GM12878 (cell line): ENCODE measurements at regions of chr1 and their contacts with region 1.

Region 1: DNA sequence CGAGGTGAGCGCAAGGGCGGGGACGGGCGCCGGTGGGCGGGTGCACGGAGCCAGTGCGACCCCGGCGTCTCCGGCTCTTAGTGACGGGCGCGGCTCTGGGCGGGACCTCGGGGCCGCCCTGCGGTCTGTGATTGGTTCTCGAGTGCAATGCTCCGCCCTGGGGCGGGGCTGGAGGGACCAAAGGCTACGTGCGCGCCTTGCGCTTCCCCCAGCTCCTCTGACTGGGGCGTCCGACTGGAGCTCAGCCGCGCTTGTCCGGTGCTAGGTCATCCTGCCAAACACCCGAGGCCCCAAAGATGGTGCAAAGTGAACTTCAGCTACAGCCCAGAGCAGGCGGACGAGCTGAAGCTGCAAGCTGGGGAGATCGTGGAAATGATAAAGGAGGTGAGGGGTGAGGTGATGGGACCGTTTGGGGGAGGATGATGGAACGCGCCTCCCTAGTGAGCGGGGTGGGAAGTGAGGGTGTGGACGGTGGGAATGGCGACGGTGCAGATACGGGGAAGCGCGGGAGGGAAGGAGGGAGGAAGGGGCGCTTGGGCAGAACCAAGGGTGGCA is 811 bp downstream of the SH3D21 start:
- DNase-seq: peak; percentile 80
- ATAC-seq: peak; percentile 99
- H3K4me3 ChIP-seq: peak overlapping the region; percentile 95
- H3K27ac ChIP-seq: peak overlapping the region; percentile 46
- H3K4me1 ChIP-seq: peaks cover 27% of the 10 kb centered on the region
- H3K27me3 ChIP-seq: no peaks in the 10 kb centered on the region
- CTCF ChIP-seq: no peak
- EP300 ChIP-seq: no peak
- POLR2A ChIP-seq: peak; percentile 98
- RAD21 ChIP-seq: no peak

Region 2: DNA sequence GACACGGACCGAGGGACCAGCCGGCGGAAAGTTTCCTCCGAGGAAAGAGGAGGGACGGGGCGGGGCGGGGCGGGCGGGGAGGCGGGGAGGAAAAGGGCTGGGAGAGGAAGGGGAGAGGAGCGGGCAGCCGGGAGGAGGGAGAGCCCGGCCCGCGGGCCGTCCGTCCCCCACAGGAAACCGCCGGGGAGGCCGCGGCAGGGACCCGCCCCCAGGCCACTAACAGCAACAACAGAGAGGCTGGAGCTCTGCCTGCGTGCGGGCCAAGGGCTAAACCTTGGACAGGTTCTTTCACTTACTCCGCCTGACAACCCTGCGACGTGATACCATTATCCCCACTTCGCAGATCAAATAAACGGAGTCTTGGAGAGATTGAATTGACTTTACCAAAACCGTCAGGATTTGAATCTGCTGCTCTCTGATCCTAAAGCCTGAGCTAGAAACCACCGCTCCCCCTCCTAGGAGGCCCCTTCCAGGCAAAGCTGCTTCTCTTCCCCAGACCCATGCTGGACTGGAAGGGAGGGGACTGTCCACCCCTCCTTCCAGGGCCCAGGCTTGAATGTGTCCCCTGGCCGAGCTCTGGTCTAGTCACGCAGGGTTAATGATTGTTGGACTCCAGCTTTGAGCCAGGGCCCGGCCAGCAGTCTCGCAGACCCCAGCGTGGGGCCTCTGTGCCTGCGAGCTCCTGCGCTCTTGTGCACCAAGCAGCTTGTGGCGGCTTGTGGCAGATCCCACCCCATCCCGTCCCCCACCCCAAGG is 16.8 kb after region 1 on chr1 and contains the start of gene EVA1B:
- CTCF ChIA-PET with region 1: interaction called, 10 read pairs
- POLR2A ChIA-PET with region 1: interaction called, 5 read pairs
- RAD21 ChIA-PET with region 1: interaction called, 5 read pairs
- SMC1A ChIA-PET with region 1: interaction called, 5 read pairs
- in situ Hi-C with region 1: no loop called
- intact Hi-C with region 1: no loop called
- DNase-seq: no peak
- ATAC-seq: peak; percentile 69
- H3K4me3 ChIP-seq: peak within 1 kb of the TSS; percentile 70
- H3K27ac ChIP-seq: no peak within 1 kb of the TSS
- H3K4me1 ChIP-seq: peaks cover 24% of the 10 kb centered on the region
- H3K27me3 ChIP-seq: no peaks in the 10 kb centered on the region
- CTCF ChIP-seq: no peak
- EP300 ChIP-seq: no peak
- POLR2A ChIP-seq: no peak; the same call in 1 of the 2 replicates
- RAD21 ChIP-seq: no peak
- polyA plus RNA-seq, gene EVA1B: 0.15 TPM in 1 of 2 experiments, not detected in the other

Region 3: DNA sequence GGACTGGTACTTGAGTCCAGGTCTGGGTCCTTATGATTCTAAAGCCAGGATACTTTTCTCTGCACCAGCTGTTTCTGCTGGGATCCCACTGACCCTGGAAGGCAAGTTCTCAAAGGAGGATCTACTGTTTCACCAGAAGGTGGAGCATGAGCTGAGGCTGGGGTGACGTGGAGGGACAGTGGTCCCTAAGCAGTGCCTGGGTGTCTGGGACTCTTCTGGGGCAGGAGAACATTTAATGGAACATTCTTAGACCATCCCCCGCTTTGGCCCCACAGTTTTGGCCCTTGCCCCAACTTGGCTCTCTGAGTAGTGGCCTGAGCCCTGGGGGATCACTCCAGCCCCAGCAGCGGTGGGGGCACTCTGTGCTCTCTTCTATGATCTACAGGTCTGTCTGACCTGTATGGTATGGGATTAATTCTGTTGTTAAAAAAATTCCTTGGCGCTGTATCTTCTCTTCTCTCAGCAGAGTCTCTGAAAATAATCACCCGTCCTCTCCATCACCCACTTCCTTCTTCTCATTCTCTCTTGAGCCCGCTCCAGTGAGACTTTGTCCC is 236.1 kb after region 1 on chr1:
- CTCF ChIA-PET with region 1: no interaction called
- POLR2A ChIA-PET with region 1: no interaction called
- RAD21 ChIA-PET with region 1: no interaction called
- SMC1A ChIA-PET with region 1: no interaction called
- in situ Hi-C with region 1: no loop called
- intact Hi-C with region 1: no loop called
- DNase-seq: no peak
- ATAC-seq: peak; percentile 47; the same call in 2 of the 3 replicates
- H3K4me3 ChIP-seq: no peak overlapping the region
- H3K27ac ChIP-seq: no peak overlapping the region
- H3K4me1 ChIP-seq: no peaks in the 10 kb centered on the region
- H3K27me3 ChIP-seq: no peaks in the 10 kb centered on the region
- CTCF ChIP-seq: peak in 2 of 3 experiments; percentile 9 to 14; a peak in 1 of 6 replicates
- EP300 ChIP-seq: no peak
- POLR2A ChIP-seq: no peak
- RAD21 ChIP-seq: no peak

Region 4: GRCh38 chr1:36625935-36626310 is 318.9 kb after region 1 on chr1:
- CTCF ChIA-PET with region 1: no interaction called
- POLR2A ChIA-PET with region 1: no interaction called
- RAD21 ChIA-PET with region 1: no interaction called
- SMC1A ChIA-PET with region 1: no interaction called
- in situ Hi-C with region 1: no loop called
- intact Hi-C with region 1: no loop called
- DNase-seq: no peak
- ATAC-seq: no peak
- H3K4me3 ChIP-seq: no peak overlapping the region
- H3K27ac ChIP-seq: no peak overlapping the region
- H3K4me1 ChIP-seq: no peaks in the 10 kb centered on the region
- H3K27me3 ChIP-seq: peaks cover 1 to 3% of the 10 kb centered on the region in 2 experiments; a peak in 2 of 4 replicates
- CTCF ChIP-seq: no peak
- EP300 ChIP-seq: no peak
- POLR2A ChIP-seq: no peak
- RAD21 ChIP-seq: no peak